Dendritic cell treated with granulocyte-macrophage colony-stimulating factor and Interleukin-4, amounts not matched to agents 40 ng/mL and 50 ng/mL, for 4 days (primary cell): ENCODE measurements at regions of chr18 and their contacts with region 1.

Region 1: DNA sequence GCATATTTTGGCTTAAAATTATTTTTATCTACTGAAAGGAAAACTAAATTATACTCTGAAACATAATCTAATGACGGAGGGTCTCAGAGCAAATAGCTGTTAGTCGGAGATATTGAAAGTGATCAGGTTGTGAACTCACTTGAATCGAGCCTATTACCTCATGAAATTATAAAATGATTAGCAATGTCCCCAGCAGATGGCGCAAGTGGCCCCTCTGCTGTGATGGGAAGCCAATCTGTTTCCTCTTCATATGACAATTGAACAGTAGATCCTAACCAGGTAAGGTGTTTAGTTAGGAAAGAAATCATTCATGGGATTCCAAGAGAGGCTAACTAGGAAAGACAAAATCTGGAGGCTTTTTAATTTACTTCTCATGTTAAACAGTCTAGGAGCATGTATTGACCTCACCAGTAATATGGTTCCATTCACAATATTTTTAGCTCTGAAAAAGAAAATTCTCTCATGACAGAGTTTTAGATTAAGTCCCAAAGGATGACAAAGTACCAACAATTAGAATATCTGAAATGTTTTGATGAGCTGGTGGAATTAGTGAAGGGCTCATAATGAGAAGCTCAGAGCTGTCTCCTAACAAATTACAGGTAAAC is 29.9 kb upstream of the MPPE1 start:
- H3K4me3 Mint-ChIP-seq: no peak overlapping the region
- H3K27ac Mint-ChIP-seq: no peak overlapping the region
- H3K4me1 Mint-ChIP-seq: peaks cover 16% of the 10 kb centered on the region
- H3K27me3 Mint-ChIP-seq: no peaks in the 10 kb centered on the region

Region 2: DNA sequence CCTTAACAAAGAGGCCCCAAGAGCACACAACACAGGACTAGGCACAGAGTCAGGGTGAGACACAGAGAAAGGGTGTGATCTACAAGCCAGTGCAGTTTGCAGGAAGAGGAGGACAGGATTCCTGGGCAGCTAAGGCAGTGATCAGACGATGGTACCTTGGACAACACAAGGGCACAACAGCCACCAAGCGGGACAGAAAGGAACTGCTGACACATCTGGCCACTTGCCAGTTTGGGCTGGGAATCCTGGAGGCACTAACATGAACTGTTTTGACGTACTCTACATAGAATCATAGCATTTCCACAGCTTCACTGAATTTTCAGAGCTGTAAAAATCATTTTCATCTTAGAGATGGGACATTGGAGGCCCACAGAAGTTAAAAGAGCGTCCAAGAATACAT is 550.1 kb before region 1 on chr18:
- intact Hi-C with region 1: no loop called
- H3K4me3 Mint-ChIP-seq: no peak overlapping the region
- H3K27ac Mint-ChIP-seq: no peak overlapping the region
- H3K4me1 Mint-ChIP-seq: no peaks in the 10 kb centered on the region
- H3K27me3 Mint-ChIP-seq: no peaks in the 10 kb centered on the region

Region 3: GRCh38 chr18:11437046-11437445 is 500.9 kb before region 1 on chr18:
- intact Hi-C with region 1: no loop called
- H3K4me3 Mint-ChIP-seq: no peak overlapping the region
- H3K27ac Mint-ChIP-seq: no peak overlapping the region
- H3K4me1 Mint-ChIP-seq: no peaks in the 10 kb centered on the region
- H3K27me3 Mint-ChIP-seq: no peaks in the 10 kb centered on the region

Region 4: DNA sequence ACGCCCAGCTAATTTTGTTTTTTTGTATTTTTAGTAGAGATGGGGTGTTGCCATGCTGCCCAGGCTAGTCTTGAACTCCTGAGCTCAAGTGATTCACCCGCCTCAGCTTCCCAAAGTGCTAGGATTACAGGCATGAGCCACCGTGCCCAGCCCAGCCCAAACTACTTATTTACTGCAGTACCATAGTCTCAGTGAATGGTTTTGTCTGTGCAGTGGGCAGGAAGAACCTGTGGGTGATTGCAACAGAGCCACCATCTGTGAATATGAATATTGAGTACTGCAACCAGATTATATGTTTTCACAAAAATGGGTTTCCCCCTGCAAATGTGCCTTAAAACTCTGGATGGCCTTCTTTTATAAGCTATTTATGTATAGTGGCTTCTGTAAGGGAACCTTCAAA is 38.9 kb before region 1 on chr18:
- intact Hi-C with region 1: no loop called
- H3K4me3 Mint-ChIP-seq: no peak overlapping the region
- H3K27ac Mint-ChIP-seq: no peak overlapping the region
- H3K4me1 Mint-ChIP-seq: peaks cover 19% of the 10 kb centered on the region
- H3K27me3 Mint-ChIP-seq: no peaks in the 10 kb centered on the region

Region 5: GRCh38 chr18:11995445-11996189 is 57.6 kb after region 1 on chr18:
- intact Hi-C with region 1: loop called (anchors 1 kb)
- H3K4me3 Mint-ChIP-seq: no peak overlapping the region
- H3K27ac Mint-ChIP-seq: peak overlapping the region; percentile 61
- H3K4me1 Mint-ChIP-seq: peaks cover 50% of the 10 kb centered on the region
- H3K27me3 Mint-ChIP-seq: no peaks in the 10 kb centered on the region

Region 6: DNA sequence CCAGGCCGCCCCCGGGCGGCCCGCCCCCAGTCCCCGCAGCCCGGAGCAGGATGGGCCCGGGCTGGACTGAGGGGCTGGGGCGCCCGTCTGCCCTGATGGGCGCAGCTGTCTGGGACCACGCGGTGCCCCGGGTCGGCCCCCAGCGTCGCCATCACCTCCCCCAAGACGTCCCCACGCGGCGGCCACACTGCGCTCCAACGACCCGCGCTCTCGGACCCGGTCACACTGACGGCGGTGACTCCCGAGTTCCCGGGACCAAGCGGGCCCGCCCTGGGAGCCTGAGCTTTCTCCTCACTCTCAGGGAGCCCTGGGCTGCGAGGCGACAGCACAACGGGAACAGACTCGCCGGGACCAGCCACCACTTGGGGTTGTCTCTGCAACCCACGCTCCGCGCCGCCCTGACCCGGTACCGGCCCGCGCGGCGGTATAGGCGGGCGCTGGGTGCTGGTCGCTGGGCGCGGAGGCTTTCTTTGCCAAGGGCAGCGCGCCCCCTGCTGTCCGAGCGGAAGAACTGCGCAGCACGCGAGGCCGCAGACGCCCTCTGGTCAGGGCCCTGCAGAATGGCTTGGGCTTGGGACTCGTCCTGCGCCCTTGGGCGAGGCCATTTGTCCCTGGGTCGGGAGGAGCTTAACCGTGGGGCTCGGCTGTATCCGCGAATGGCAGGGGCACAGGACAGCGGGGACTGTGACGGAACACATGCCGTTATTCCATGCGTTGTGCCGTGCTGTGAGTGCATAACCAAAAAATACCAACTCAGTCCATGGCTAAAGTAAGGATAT is 100.9 kb after region 1 on chr18:
- intact Hi-C with region 1: loop called (anchors 1 kb)
- H3K4me3 Mint-ChIP-seq: peak overlapping the region; percentile 85
- H3K27ac Mint-ChIP-seq: peak overlapping the region; percentile 82
- H3K4me1 Mint-ChIP-seq: peaks cover 50% of the 10 kb centered on the region
- H3K27me3 Mint-ChIP-seq: peaks cover 17% of the 10 kb centered on the region